Pancreas (tissue), 10 donors: ENCODE measurements at regions of chr3 and their contacts with region 1.

Region 1: GRCh38 chr3:11059090-11059798 is 66.7 kb downstream of the SLC6A1 start:
- DNase-seq: peak in 3 of 6 donors; percentile 19 to 49 (median 30)
- ATAC-seq: peak in 3 of 4 donors; percentile 85 to 94 (median 92)
- H3K4me3 ChIP-seq: no peak overlapping the region
- H3K27ac ChIP-seq: no peak overlapping the region
- H3K4me1 ChIP-seq: no peaks in the 10 kb centered on the region
- H3K27me3 ChIP-seq: no peaks in the 10 kb centered on the region
- CTCF ChIP-seq: peak; percentile 20 to 49 (median 46)

Region 2: DNA sequence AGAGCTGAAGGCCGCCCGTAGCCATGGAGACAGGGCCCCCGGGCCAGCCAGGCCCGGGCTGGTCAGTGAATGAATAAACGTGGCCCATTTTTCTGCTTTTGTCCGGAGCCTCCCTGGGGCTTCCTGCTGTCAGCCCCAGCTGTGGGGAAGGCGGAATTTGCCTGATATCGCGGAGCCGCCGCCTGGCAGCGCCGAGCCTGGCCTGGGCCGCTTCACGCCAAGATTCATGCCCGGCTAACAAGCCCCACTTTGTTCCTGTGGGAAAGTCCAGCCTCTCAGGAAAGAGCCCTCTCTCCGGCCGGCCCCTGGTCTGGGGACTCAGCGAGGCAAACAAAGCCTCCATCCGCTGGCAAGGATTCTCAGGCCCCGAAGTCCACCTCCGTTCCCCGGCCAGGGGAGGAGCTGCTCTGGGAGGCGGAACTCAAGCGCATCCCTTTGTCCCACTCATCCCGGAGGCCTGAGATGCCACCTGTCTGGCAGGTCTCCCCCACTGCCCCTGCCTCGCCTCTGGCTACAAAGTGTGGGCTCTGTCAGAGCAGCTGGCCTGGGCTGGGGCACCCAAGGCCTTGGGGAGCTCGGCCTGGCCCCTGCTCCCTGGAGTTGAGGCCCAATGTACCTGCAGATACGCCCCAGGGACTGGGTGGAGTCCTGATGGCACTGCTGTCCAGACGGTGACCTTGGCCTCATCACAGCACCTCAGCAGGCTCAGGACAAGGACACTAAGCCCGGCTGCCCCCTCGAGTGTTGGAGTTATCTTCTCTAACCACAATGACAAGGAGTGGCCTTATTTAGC is 294.8 kb before region 1 on chr3:
- intact Hi-C with region 1: loop called in 2 of 3 experiments (anchors 5 to 10 kb)
- DNase-seq: peak in 1 of 6 donors; percentile 34
- ATAC-seq: no peak
- H3K4me3 ChIP-seq: no peak overlapping the region
- H3K27ac ChIP-seq: no peak overlapping the region
- H3K4me1 ChIP-seq: no peaks in the 10 kb centered on the region
- H3K27me3 ChIP-seq: no peaks in the 10 kb centered on the region
- CTCF ChIP-seq: no peak

Region 3: GRCh38 chr3:10867384-10867783 is 191.9 kb before region 1 on chr3:
- intact Hi-C with region 1: no loop called
- DNase-seq: no peak
- ATAC-seq: no peak
- H3K4me3 ChIP-seq: no peak overlapping the region
- H3K27ac ChIP-seq: no peak overlapping the region
- H3K4me1 ChIP-seq: no peaks in the 10 kb centered on the region
- H3K27me3 ChIP-seq: no peaks in the 10 kb centered on the region
- CTCF ChIP-seq: no peak

Region 4: DNA sequence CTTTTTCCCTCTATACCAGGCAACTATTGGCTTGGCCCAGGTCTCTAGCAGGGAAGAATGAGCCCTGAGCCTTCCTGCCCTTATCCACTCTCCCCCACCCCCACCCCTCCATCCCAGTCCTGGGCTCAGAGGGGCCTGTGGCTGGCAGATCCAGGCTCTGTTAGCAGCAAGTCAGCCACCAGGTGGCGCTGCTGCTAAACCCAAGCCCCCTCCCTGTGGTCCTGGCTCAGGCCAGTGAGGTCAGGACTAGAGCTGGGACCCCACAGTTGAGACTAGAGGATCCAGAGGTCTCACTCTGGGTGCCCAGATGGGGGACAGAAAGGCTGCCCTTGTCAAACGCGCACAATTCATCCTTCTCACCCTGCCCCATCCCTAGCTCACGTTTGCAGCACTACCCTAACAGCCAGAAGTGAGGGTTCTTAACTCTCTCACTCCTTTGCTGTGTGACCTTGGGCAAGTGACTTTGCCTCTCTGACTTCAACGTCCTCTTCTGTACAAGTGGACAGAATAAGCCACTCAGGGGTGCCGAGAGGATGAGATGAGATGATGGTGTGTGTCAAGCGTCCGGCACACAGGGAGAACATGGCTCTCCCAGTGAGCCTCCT is 113.5 kb before region 1 on chr3:
- intact Hi-C with region 1: loop called in 2 of 3 experiments (anchors 5 kb)
- DNase-seq: peak in 5 of 6 donors; percentile 15 to 86 (median 65)
- ATAC-seq: peak; percentile 55 to 81 (median 80)
- H3K4me3 ChIP-seq: no peak overlapping the region
- H3K27ac ChIP-seq: no peak overlapping the region
- H3K4me1 ChIP-seq: no peaks in the 10 kb centered on the region
- H3K27me3 ChIP-seq: no peaks in the 10 kb centered on the region
- CTCF ChIP-seq: peak; percentile 46 to 77 (median 72)